ENCODE measurements at regions of chr11 and their contacts with region 1.

Region 1: GRCh38 chr11:86021377-86021776 is 47.5 kb downstream of the PICALM start:
- DNase-seq: no peak
- H3K4me3 Mint-ChIP-seq: no peak overlapping the region
- H3K27ac Mint-ChIP-seq: peak overlapping the region; percentile 33
- H3K4me1 Mint-ChIP-seq: peaks cover 46% of the 10 kb centered on the region
- H3K27me3 Mint-ChIP-seq: no peaks in the 10 kb centered on the region

Region 2: DNA sequence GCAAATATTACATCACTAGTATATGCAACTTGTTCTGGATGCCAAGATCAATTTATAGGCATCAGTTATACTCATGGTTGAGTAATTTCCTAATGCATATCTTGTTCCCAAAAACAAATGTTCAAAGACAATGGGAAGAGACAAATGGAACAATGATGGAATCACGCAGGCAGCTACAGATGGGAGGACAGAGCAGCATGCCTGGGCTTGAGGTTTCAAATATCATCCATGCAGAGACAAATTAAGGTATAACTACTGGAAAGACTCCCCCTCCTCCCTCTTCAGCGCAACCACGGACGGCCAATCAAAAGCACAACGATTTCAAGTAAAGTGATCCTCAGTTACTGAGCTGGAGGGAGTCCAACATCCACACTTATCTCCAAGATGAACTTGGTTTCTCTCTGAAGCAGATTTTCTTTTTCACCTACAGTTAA is 59.4 kb before region 1 on chr11:
- CTCF ChIA-PET with region 1: no interaction called
- POLR2A ChIA-PET with region 1: no interaction called
- intact Hi-C with region 1: loop called (anchors 5 kb)
- DNase-seq: no peak
- H3K4me3 Mint-ChIP-seq: no peak overlapping the region
- H3K27ac Mint-ChIP-seq: no peak overlapping the region
- H3K4me1 Mint-ChIP-seq: peaks cover 11% of the 10 kb centered on the region
- H3K27me3 Mint-ChIP-seq: no peaks in the 10 kb centered on the region

Region 3: GRCh38 chr11:86056351-86056854 is 35.0 kb after region 1 on chr11:
- CTCF ChIA-PET with region 1: no interaction called
- POLR2A ChIA-PET with region 1: no interaction called
- intact Hi-C with region 1: no loop called
- DNase-seq: no peak
- H3K4me3 Mint-ChIP-seq: no peak overlapping the region
- H3K27ac Mint-ChIP-seq: peak overlapping the region; percentile 20
- H3K4me1 Mint-ChIP-seq: peaks cover 92% of the 10 kb centered on the region
- H3K27me3 Mint-ChIP-seq: no peaks in the 10 kb centered on the region